ENCODE measurements at regions of chr9 and their contacts with region 1.

Region 1: GRCh38 chr9:14415947-14416346 is 102.0 kb upstream of the NFIB start:
- DNase-seq: peak; percentile 92
- ATAC-seq: peak; percentile 96
- H3K4me3 ChIP-seq: no peak overlapping the region
- H3K27ac ChIP-seq: no peak overlapping the region
- H3K4me1 ChIP-seq: peaks cover 4% of the 10 kb centered on the region
- H3K27me3 ChIP-seq: peaks cover 58% of the 10 kb centered on the region
- CTCF ChIP-seq: no peak
- POLR2A ChIP-seq: no peak
- RAD21 ChIP-seq: no peak

Region 2: GRCh38 chr9:14251154-14252071 is 164.5 kb before region 1 on chr9:
- CTCF ChIA-PET with region 1: no interaction called
- POLR2A ChIA-PET with region 1: no interaction called
- dilution Hi-C with region 1: no loop called
- in situ Hi-C with region 1: no loop called
- intact Hi-C with region 1: loop called (anchors 10 kb)
- DNase-seq: peak; percentile 68
- ATAC-seq: peak; percentile 63
- H3K4me3 ChIP-seq: no peak overlapping the region
- H3K27ac ChIP-seq: no peak overlapping the region
- H3K4me1 ChIP-seq: peaks cover 3% of the 10 kb centered on the region
- H3K27me3 ChIP-seq: peaks cover 7% of the 10 kb centered on the region
- CTCF ChIP-seq: no peak
- POLR2A ChIP-seq: no peak
- RAD21 ChIP-seq: no peak

Region 3: GRCh38 chr9:14400658-14400995 is 15.3 kb before region 1 on chr9:
- CTCF ChIA-PET with region 1: interaction called, 11 read pairs
- POLR2A ChIA-PET with region 1: no interaction called
- dilution Hi-C with region 1: no loop called
- in situ Hi-C with region 1: no loop called
- intact Hi-C with region 1: no loop called
- DNase-seq: peak; percentile 58
- ATAC-seq: peak; percentile 63
- H3K4me3 ChIP-seq: no peak overlapping the region
- H3K27ac ChIP-seq: no peak overlapping the region
- H3K4me1 ChIP-seq: peaks cover 2% of the 10 kb centered on the region; the same call in 1 of the 2 replicates
- H3K27me3 ChIP-seq: peaks cover 47% of the 10 kb centered on the region
- CTCF ChIP-seq: peak; percentile 48
- POLR2A ChIP-seq: no peak
- RAD21 ChIP-seq: peak; percentile 61

Measured in IMR-90 (cell line).